A549 (cell line): ENCODE measurements at regions of chr19 and their contacts with region 1.

Region 1: GRCh38 chr19:7605490-7606222 is 10.0 kb downstream of the CAMSAP3 start:
- DNase-seq: peak in 1 of 2 experiments; percentile 72
- ATAC-seq: peak; percentile 67 to 88
- H3K4me3 ChIP-seq: no peak overlapping the region
- H3K27ac ChIP-seq: no peak overlapping the region
- H3K4me1 ChIP-seq: no peaks in the 10 kb centered on the region
- CTCF ChIP-seq: no peak
- EP300 ChIP-seq: no peak
- POLR2A ChIP-seq: no peak
- RAD21 ChIP-seq: no peak

Region 2: DNA sequence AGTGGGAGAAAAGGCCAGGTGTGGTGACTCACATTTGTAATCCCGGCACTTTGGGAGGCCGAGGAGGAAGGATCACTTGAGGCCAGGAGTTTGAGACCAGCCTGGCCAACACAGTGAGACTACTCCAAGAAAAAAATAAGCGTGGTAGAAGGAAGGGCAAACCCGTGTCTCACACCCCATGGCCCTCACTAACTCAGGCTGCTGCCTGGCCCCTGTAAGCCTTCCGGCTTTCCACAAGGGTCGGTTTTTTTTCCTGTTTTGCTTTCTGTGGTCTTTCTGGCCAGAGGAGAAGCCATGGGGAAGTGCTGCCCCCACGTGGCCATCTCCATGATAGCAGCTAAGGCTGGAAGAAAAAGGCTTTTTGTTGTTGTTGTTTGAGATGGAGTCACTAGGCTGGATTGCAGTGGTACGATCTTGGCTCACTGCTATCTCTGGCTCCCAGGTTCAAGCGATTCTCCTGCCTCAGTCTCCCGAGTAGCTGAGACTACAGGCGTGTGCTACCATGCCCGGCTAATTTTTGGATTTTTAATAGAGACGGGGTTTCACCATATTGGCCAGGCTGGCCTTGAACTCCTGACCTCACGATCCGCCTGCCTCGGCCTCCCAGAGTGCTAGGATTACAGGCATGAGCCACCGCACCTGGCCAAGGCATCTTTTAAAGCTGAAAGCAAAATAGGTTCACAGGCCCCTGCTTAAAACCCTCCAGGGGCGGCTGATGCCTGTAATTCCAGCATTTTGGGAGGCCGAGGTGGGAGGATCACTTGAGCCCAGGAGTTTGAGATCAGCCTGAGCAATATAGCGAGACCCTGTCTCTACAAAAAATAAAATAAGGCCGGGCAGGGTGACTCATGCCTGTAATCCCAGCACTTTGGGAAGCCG is 264.5 kb before region 1 on chr19:
- CTCF ChIA-PET with region 1: no interaction called
- POLR2A ChIA-PET with region 1: no interaction called
- DNase-seq: peak; percentile 29 to 69
- ATAC-seq: peak; percentile 47 to 71; a peak in 4 of 6 replicates
- H3K4me3 ChIP-seq: no peak overlapping the region
- H3K27ac ChIP-seq: no peak overlapping the region
- H3K4me1 ChIP-seq: no peaks in the 10 kb centered on the region
- CTCF ChIP-seq: peak; percentile 85
- EP300 ChIP-seq: no peak
- POLR2A ChIP-seq: no peak
- RAD21 ChIP-seq: peak; percentile 89 to 93

Region 3: GRCh38 chr19:7595466-7596133 is 10.1 kb before region 1 on chr19 and contains the start of gene CAMSAP3:
- CTCF ChIA-PET with region 1: interaction called, 13 read pairs
- POLR2A ChIA-PET with region 1: no interaction called
- DNase-seq: peak in 1 of 2 experiments; percentile 17
- ATAC-seq: peak; percentile 75 to 86
- H3K4me3 ChIP-seq: peak within 1 kb of the TSS; percentile 85
- H3K27ac ChIP-seq: peak within 1 kb of the TSS; percentile 80 to 91
- H3K4me1 ChIP-seq: 0 out of 3 replicates have a peak, but pooled peaks cover 5% of the 10 kb centered on the region
- CTCF ChIP-seq: no peak
- EP300 ChIP-seq: no peak
- POLR2A ChIP-seq: no peak
- RAD21 ChIP-seq: no peak
- polyA plus RNA-seq, gene CAMSAP3: 0.81 and 1.3 TPM in 2 replicates